MCF 10A (cell line): ENCODE measurements at regions of chr10 and their contacts with region 1.

Region 1: DNA sequence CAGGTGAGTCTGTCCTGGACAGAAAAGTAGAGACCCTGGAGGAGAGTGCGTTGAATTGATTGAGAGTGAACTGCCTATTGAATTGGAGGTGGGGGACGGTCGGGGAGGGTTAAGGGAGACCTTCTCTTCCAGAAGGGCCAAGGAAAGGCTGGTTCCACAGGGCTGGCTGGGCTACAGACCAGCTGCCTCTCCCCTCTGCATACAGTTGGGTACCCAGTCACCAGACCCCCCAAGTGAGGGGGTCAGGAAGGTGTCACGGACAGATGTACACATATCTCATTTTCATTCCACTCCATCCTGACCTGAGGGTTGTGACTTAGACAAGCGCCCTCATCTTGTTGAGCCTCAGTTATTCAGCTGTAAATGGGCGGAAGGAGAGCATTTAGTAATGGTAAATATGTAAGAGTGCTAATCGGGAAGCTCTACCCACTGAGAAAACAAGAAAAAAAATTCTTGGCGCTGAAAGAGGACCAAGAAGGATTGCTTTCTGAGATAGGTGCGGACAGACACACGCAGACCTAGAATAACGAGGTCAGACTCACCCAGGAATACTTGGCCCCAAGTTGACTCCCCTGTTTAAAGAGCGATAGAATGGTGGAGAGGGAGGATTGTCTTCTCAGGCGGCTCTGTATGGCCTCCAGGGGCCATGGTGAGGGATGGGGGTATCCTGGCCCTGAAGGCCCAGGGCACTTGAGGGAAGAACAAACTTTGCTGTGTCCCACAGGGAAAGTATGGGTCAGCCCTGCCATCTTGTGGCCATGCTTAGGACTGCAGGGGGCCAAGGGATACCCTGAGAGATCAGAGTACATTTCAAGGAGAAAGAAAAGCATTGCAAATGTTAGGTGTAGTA is 7.2 kb upstream of the MBL2 start:
- DNase-seq: peak; percentile 70
- H3K4me3 Mint-ChIP-seq: no peak overlapping the region
- H3K27ac Mint-ChIP-seq: no peak overlapping the region
- H3K4me1 Mint-ChIP-seq: no peaks in the 10 kb centered on the region
- H3K27me3 Mint-ChIP-seq: no peaks in the 10 kb centered on the region
- CTCF ChIP-seq: peak; percentile 95

Region 2: GRCh38 chr10:52677086-52677485 is 102.7 kb before region 1 on chr10:
- CTCF ChIA-PET with region 1: interaction called, 11 read pairs
- POLR2A ChIA-PET with region 1: no interaction called
- intact Hi-C with region 1: no loop called
- DNase-seq: no peak
- H3K4me3 Mint-ChIP-seq: no peak overlapping the region
- H3K27ac Mint-ChIP-seq: no peak overlapping the region
- H3K4me1 Mint-ChIP-seq: no peaks in the 10 kb centered on the region
- H3K27me3 Mint-ChIP-seq: no peaks in the 10 kb centered on the region
- CTCF ChIP-seq: no peak

Region 3: GRCh38 chr10:52729271-52730104 is 50.3 kb before region 1 on chr10:
- CTCF ChIA-PET with region 1: interaction called, 24 read pairs
- POLR2A ChIA-PET with region 1: no interaction called
- intact Hi-C with region 1: no loop called
- DNase-seq: peak; percentile 50
- H3K4me3 Mint-ChIP-seq: no peak overlapping the region
- H3K27ac Mint-ChIP-seq: no peak overlapping the region
- H3K4me1 Mint-ChIP-seq: no peaks in the 10 kb centered on the region
- H3K27me3 Mint-ChIP-seq: no peaks in the 10 kb centered on the region
- CTCF ChIP-seq: peak; percentile 58

Region 4: GRCh38 chr10:52755297-52756062 is 24.3 kb before region 1 on chr10:
- CTCF ChIA-PET with region 1: interaction called, 42 read pairs
- POLR2A ChIA-PET with region 1: no interaction called
- intact Hi-C with region 1: no loop called
- DNase-seq: peak; percentile 65
- H3K4me3 Mint-ChIP-seq: no peak overlapping the region
- H3K27ac Mint-ChIP-seq: no peak overlapping the region
- H3K4me1 Mint-ChIP-seq: peaks cover 7% of the 10 kb centered on the region
- H3K27me3 Mint-ChIP-seq: no peaks in the 10 kb centered on the region
- CTCF ChIP-seq: no peak

Region 5: GRCh38 chr10:52877451-52877850 is 97.7 kb after region 1 on chr10:
- CTCF ChIA-PET with region 1: no interaction called
- POLR2A ChIA-PET with region 1: no interaction called
- intact Hi-C with region 1: no loop called
- DNase-seq: peak; percentile 54
- H3K4me3 Mint-ChIP-seq: no peak overlapping the region
- H3K27ac Mint-ChIP-seq: no peak overlapping the region
- H3K4me1 Mint-ChIP-seq: peaks cover 36% of the 10 kb centered on the region
- H3K27me3 Mint-ChIP-seq: no peaks in the 10 kb centered on the region
- CTCF ChIP-seq: no peak